ACHN (cell line): ENCODE measurements at regions of chr16 and their contacts with region 1.

Region 1: DNA sequence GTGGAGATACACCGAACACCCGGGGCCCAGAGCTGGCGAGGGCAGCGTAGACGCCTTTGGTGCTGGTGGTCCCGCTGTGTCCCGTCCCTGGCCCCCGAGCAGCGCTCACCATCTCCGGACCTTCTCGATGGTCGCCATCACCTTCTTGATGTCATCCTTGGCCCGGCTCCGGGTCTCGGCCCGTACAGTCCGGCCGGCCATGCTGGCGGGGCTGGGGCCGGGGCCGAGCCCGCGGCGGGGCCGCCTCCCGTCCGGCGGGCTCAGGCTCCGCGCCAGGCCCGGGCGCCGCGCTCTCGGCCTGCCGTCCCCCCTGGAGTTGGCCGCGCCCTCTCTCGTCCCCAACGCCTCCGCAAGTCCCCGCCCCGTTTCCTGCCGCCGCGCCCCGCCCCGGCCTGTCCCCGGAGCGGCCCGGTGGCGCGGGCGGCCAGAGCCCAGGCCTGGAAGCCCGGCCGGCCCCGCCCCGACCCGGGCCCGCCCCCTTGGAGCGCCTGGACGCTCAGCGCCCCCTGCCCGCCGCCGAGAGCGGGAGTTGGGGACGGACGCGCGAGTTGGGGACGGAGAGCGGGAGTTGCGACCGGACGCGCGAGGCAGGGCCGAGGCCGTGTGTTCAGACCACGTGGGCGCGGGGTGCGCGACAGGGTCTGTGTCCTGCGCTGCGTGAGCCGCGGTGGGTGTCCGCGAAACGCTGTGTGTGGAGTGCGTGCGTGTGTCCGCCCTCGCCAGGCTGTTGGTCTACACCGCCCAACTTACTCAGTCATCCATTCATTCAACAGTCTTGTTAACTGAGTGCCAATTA is at the start of gene BCL7C:
- DNase-seq: peak; percentile 95

Region 2: DNA sequence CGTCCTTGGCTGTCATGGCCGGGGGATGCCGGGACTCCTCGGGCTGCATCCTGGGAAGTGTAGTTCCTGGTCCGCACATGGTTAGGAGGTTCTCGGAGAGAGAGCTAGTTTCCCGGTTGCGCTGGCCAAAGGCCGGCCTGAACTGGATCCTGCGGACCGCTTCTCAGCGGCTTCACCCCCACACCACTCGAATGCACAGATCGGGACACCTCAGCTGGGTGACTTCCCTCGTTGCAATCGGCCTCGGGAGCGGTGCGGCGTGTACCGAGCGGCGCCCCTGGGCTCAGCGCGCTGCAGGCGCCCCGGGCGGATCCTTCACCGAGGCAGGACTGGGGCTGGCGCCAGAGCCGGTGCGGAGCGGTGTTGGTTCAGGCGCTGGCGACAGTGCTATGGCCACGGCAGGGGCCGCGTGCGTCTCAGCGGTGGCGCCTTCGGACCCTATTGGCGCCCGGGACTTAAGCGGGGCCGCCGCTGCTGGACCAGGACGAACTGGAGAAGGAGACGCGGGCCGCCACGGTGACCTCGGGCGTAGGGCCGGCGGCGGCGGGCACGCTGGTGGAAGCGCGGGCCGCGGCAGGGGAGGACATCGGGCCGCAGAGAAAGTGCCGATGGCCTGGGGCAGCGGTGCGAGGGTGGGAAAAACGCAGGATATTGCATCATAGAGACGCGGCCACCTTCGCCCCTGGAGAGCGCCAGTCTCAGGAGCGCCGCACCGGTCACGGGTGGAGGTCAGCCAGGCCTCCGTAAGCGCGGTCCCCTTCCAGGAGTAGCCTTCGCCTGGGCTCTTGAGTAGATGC is 118.4 kb before region 1 on chr16:
- in situ Hi-C with region 1: loop called (anchors 25 kb)
- DNase-seq: peak; percentile 88